Naive thymus-derived CD4-positive, alpha-beta T cell (primary cell): ENCODE measurements at regions of chr3 and their contacts with region 1.

Region 1: DNA sequence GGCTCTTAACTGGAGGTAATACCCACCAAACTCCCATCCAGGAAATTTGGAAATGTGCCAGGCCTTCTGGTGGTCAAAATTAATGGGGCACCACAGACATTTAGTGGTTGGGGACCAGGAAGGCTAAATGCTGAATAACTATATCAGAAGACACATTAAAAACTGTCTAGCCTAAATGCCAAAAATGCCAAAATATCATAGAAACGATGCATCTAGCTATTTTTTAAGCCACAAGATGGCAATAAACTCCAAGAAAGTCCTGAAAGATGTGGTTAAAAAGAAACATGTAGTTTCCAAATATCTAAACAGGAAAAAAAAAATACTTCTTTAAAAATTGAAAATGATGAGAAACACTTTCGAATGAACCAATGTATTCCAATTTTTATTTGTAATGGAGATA is 19.9 kb downstream of the CCDC14 start:
- DNase-seq: no peak
- ATAC-seq: no peak
- H3K4me3 ChIP-seq: no peak overlapping the region
- H3K4me3 Mint-ChIP-seq: no peak overlapping the region
- H3K27ac ChIP-seq: no peak overlapping the region
- H3K27ac Mint-ChIP-seq: no peak overlapping the region
- H3K4me1 ChIP-seq: no peaks in the 10 kb centered on the region
- H3K4me1 Mint-ChIP-seq: no peaks in the 10 kb centered on the region
- H3K27me3 ChIP-seq: no peaks in the 10 kb centered on the region
- H3K27me3 Mint-ChIP-seq: no peaks in the 10 kb centered on the region

Region 2: GRCh38 chr3:123984957-123985356 is 43.8 kb after region 1 on chr3:
- CTCF ChIA-PET with region 1: no interaction called
- POLR2A ChIA-PET with region 1: no interaction called
- intact Hi-C with region 1: loop called in 1 of 2 experiments (anchors 5 kb)
- DNase-seq: no peak
- ATAC-seq: no peak
- H3K4me3 ChIP-seq: no peak overlapping the region
- H3K4me3 Mint-ChIP-seq: no peak overlapping the region
- H3K27ac ChIP-seq: no peak overlapping the region
- H3K27ac Mint-ChIP-seq: no peak overlapping the region
- H3K4me1 ChIP-seq: no peaks in the 10 kb centered on the region
- H3K4me1 Mint-ChIP-seq: peaks cover 0 to 4% (median 0%) of the 10 kb centered on the region in 7 donors
- H3K27me3 ChIP-seq: peaks cover 0 to 5% of the 10 kb centered on the region in 2 donors
- H3K27me3 Mint-ChIP-seq: peaks cover 61 to 70% (median 67%) of the 10 kb centered on the region in 5 donors